ENCODE measurements at regions of chr10 and their contacts with region 1.

Region 1: DNA sequence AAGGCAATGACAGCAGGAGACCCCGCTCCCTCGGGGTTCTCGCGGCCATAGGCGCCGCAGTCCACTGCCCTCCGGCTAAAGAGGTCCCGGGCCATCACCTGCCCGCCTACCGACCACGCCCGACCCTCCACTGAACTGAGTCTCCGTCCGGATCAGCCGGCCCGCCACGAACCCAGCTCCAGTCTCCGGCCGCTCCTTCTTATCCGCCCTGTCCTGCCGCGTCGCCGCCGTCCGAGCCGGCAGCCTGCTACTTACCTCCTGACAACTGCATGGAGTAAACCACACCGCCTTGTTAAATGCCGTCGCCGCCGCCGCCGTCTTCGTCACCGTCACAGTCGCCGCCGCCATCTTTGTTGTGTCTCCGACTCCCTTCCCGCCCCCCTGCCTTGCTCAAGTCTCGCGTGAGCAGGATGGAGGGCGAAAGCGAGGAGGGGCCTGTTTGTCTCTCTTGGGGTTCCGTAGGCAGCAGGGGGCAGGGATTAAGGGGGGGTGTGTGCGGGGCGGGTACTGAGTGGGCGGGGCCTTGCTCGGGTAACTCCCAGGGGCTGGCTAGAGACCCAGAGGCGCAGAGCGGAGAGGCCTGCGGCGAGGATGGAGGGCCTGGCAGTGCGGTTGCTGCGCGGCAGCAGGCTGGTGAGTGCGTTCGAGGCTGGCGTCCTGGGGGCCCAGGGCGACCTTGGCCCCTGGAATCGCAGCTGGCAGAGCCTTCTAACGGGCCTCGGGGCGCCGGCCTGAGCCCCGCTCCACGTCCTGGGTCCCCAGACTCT is at the starts of genes ACADSB and IKZF5:
- DNase-seq: peak; percentile 97
- ATAC-seq: peak; percentile 93
- H3K4me3 ChIP-seq: peak within 1 kb of the TSS; percentile 63 to 100 (median 95)
- H3K4me3 Mint-ChIP-seq: peak within 1 kb of the TSS; percentile 98
- H3K27ac ChIP-seq: peak within 1 kb of the TSS; percentile 92 to 98
- H3K27ac Mint-ChIP-seq: peak within 1 kb of the TSS; percentile 98
- H3K4me1 ChIP-seq: peaks cover 22 to 25% of the 10 kb centered on the region in 2 donors
- H3K4me1 Mint-ChIP-seq: peaks cover 48% of the 10 kb centered on the region
- H3K27me3 ChIP-seq: no peaks in the 10 kb centered on the region
- H3K27me3 Mint-ChIP-seq: no peaks in the 10 kb centered on the region
- CTCF ChIP-seq: no peak
- total RNA-seq, gene ACADSB: 27.8 and 27.9 TPM in 2 replicates
- total RNA-seq, gene IKZF5: 24.0 and 24.6 TPM in 2 replicates

Region 2: DNA sequence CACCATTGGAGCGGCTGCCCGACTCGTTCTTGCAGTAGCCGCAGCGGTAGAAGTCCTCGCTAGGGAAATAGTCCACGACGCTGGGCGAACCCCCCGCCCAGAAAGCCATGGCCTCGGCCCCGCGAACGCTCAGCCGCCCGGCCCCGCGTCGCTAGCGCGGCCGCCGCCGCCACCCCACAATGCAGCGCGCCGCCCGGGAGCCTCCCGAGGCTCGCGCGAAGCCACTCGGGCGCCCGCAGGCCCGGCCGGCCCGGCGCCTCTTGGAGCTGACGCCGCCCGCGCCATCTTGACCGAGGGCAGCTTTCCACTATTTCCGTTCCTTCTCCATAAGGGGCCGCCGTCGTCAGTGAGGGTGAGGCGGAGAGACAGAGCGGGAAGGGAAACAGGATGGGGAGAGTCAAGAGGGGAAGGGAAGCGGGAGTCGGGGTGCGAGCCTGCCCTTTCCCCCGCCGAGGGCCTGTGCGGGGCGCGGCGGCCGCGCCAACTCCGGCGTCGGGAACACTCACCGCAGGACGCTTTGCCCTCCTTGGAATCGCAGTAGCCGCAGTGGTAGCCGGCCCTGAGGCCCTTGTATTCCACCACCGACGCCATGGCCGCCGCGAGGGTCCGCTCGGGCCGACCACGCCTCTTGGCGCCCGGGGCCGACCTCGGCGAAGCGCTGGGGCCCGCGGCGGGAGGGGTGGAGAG is 1080.6 kb before region 1 on chr10 and contains the start of gene ATE1:
- CTCF ChIA-PET with region 1: no interaction called
- POLR2A ChIA-PET with region 1: interaction called, 3 read pairs
- intact Hi-C with region 1: loop called (anchors 2 kb)
- DNase-seq: peak; percentile 89
- ATAC-seq: peak; percentile 93
- H3K4me3 ChIP-seq: peak within 1 kb of the TSS; percentile 71 to 99 (median 82)
- H3K4me3 Mint-ChIP-seq: peak within 1 kb of the TSS; percentile 96
- H3K27ac ChIP-seq: peak within 1 kb of the TSS; percentile 96 to 97
- H3K27ac Mint-ChIP-seq: peak within 1 kb of the TSS; percentile 94
- H3K4me1 ChIP-seq: peaks cover 10 to 16% of the 10 kb centered on the region in 2 donors
- H3K4me1 Mint-ChIP-seq: peaks cover 19% of the 10 kb centered on the region
- H3K27me3 ChIP-seq: no peaks in the 10 kb centered on the region
- H3K27me3 Mint-ChIP-seq: no peaks in the 10 kb centered on the region
- CTCF ChIP-seq: no peak
- total RNA-seq, gene ATE1: 32.0 and 40.3 TPM in 2 replicates

Region 3: GRCh38 chr10:122879339-122880273 is 129.0 kb before region 1 on chr10 and contains the start of gene FAM24B:
- CTCF ChIA-PET with region 1: no interaction called
- POLR2A ChIA-PET with region 1: no interaction called
- intact Hi-C with region 1: loop called (anchors 1 kb)
- DNase-seq: peak; percentile 96
- ATAC-seq: peak; percentile 84
- H3K4me3 ChIP-seq: peak within 1 kb of the TSS; percentile 49 to 83 (median 64)
- H3K4me3 Mint-ChIP-seq: peak within 1 kb of the TSS; percentile 86
- H3K27ac ChIP-seq: peak within 1 kb of the TSS; percentile 62 to 86
- H3K27ac Mint-ChIP-seq: peak within 1 kb of the TSS; percentile 92
- H3K4me1 ChIP-seq: peaks cover 12 to 17% of the 10 kb centered on the region in 2 donors
- H3K4me1 Mint-ChIP-seq: peaks cover 39% of the 10 kb centered on the region
- H3K27me3 ChIP-seq: no peaks in the 10 kb centered on the region
- H3K27me3 Mint-ChIP-seq: no peaks in the 10 kb centered on the region
- CTCF ChIP-seq: no peak
- total RNA-seq, gene FAM24B: 11.7 and 12.5 TPM in 2 replicates

Region 4: GRCh38 chr10:122953827-122954730 is 54.5 kb before region 1 on chr10 and contains the start of gene C10orf88:
- CTCF ChIA-PET with region 1: interaction called, 3 read pairs
- POLR2A ChIA-PET with region 1: interaction called, 12 read pairs
- intact Hi-C with region 1: loop called (anchors 1 kb)
- DNase-seq: peak; percentile 99
- ATAC-seq: peak; percentile 93
- H3K4me3 ChIP-seq: peak within 1 kb of the TSS; percentile 17 to 92 (median 87)
- H3K4me3 Mint-ChIP-seq: peak within 1 kb of the TSS; percentile 87
- H3K27ac ChIP-seq: peak within 1 kb of the TSS; percentile 58 to 82
- H3K27ac Mint-ChIP-seq: peak within 1 kb of the TSS; percentile 91
- H3K4me1 ChIP-seq: peaks cover 16 to 19% of the 10 kb centered on the region in 2 donors
- H3K4me1 Mint-ChIP-seq: peaks cover 26% of the 10 kb centered on the region
- H3K27me3 ChIP-seq: no peaks in the 10 kb centered on the region
- H3K27me3 Mint-ChIP-seq: no peaks in the 10 kb centered on the region
- CTCF ChIP-seq: no peak
- total RNA-seq, gene C10orf88: 11.1 and 11.9 TPM in 2 replicates

Region 5: DNA sequence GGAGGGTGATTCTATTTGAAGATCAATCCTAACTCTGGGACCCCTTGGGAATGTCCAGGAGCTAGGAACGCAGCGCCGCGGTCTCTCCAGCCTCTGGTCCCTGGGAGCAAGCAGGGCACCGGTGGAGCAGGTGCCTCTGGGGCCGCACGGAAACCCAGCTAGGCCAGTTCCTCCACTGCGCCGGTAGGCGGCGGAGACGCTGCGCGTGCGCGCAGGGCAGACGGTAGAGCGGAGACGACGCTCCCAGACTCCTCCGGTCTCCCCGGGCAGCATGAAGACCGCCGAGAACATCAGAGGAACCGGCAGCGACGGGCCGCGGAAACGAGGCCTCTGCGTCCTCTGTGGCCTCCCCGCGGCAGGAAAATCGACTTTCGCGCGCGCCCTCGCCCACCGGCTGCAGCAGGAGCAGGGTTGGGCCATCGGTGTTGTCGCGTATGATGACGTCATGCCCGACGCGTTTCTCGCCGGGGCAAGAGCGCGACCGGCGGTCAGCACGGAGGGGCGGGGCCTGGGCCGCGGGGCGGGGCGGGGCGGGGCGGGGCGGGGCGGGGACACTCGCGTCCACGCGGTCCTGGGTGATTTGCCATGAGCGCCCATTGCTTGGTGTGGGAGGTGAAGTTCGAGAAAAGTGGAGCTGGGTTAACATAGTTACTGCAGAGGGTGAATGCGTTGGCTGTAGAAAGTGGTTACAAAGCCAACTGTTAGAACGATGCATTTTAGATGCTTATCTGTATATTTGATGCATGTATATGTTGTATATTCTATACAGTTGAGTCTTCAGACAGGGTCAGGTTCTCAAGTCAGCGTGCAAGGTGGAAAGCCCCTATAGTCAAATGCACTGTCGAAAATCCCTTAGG is 28.2 kb before region 1 on chr10 and contains the start of gene PSTK:
- CTCF ChIA-PET with region 1: interaction called, 26 read pairs
- POLR2A ChIA-PET with region 1: interaction called, 7 read pairs
- intact Hi-C with region 1: loop called (anchors 1 kb)
- DNase-seq: peak; percentile 98
- ATAC-seq: peak; percentile 95
- H3K4me3 ChIP-seq: peak within 1 kb of the TSS; percentile 55 to 86 (median 64)
- H3K4me3 Mint-ChIP-seq: peak within 1 kb of the TSS; percentile 97
- H3K27ac ChIP-seq: peak within 1 kb of the TSS; percentile 81 to 89
- H3K27ac Mint-ChIP-seq: peak within 1 kb of the TSS; percentile 99
- H3K4me1 ChIP-seq: peaks cover 10 to 15% of the 10 kb centered on the region in 2 donors
- H3K4me1 Mint-ChIP-seq: peaks cover 14% of the 10 kb centered on the region
- H3K27me3 ChIP-seq: no peaks in the 10 kb centered on the region
- H3K27me3 Mint-ChIP-seq: peaks cover 5% of the 10 kb centered on the region
- CTCF ChIP-seq: peak; percentile 97
- total RNA-seq, gene PSTK: 8.2 and 8.5 TPM in 2 replicates

Region 6: DNA sequence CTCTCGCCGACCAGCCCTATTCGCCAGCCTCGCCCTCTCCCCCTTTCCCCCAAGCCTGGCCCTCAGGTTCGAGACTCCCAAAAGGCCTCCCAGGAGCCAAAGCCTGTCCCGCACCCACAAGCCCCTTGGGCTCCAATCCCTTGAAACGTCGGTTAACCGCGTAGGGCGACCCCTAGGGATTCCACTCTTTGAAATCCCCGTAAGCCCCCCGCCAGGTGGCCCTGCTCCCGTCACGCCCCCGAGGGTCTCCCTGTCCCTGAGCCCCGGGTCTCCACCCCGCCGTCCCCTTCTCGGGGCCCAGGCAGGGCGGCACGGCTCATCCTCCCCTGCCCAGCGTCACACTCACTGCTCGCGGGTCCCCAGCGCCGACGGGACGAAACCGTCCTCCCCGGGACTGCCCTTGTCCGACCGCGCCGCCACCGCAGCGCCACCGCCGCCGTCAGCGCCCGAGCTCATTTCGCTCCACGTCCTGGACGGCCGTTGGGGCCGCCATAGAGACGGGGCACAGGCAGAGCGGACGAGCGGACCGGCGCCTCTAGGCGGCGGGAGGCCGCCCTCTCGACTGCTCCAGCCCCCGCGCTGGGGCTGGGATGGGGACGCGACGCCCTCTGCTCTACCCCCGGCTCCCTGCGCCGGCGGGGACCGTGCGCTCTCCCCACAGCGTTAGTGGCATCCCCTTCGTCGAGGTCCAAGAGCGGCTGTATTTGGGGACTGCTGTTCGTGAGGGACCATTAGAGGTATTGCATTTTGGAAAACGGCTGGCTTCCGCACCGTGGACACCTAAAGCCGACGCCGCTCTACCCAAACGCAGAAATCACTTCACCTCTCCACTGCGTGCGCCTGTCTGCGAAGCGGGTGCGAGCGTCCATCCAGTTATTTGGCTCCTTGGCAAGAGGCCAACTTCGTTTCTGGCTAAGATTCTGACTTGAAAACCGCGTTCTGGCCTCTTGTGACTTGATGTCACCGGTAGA is 1783.0 kb after region 1 on chr10 and contains the start of gene EEF1AKMT2:
- CTCF ChIA-PET with region 1: no interaction called
- POLR2A ChIA-PET with region 1: no interaction called
- intact Hi-C with region 1: loop called (anchors 2 kb)
- DNase-seq: peak; percentile 91
- ATAC-seq: peak; percentile 97
- H3K4me3 ChIP-seq: peak within 1 kb of the TSS; percentile 75 to 98 (median 95)
- H3K4me3 Mint-ChIP-seq: peak within 1 kb of the TSS; percentile 100
- H3K27ac ChIP-seq: peak within 1 kb of the TSS; percentile 68 to 79
- H3K27ac Mint-ChIP-seq: peak within 1 kb of the TSS; percentile 99
- H3K4me1 ChIP-seq: peaks cover 4 to 10% of the 10 kb centered on the region in 2 donors
- H3K4me1 Mint-ChIP-seq: peaks cover 17% of the 10 kb centered on the region
- H3K27me3 ChIP-seq: no peaks in the 10 kb centered on the region
- H3K27me3 Mint-ChIP-seq: no peaks in the 10 kb centered on the region
- CTCF ChIP-seq: peak; percentile 18
- total RNA-seq, gene EEF1AKMT2: 15.0 and 15.4 TPM in 2 replicates

Region 7: GRCh38 chr10:124916585-124917427 is 1908.2 kb after region 1 on chr10:
- CTCF ChIA-PET with region 1: no interaction called
- POLR2A ChIA-PET with region 1: no interaction called
- intact Hi-C with region 1: loop called (anchors 5 kb)
- DNase-seq: peak; percentile 98
- ATAC-seq: peak; percentile 89
- H3K4me3 ChIP-seq: peak overlapping the region; percentile 63 to 87 (median 79)
- H3K4me3 Mint-ChIP-seq: peak overlapping the region; percentile 90
- H3K27ac ChIP-seq: peak overlapping the region; percentile 81 to 87
- H3K27ac Mint-ChIP-seq: peak overlapping the region; percentile 90
- H3K4me1 ChIP-seq: peaks cover 18 to 20% of the 10 kb centered on the region in 2 donors
- H3K4me1 Mint-ChIP-seq: peaks cover 37% of the 10 kb centered on the region
- H3K27me3 ChIP-seq: peaks cover 0 to 5% (median 3%) of the 10 kb centered on the region in 4 experiments
- H3K27me3 Mint-ChIP-seq: peaks cover 9% of the 10 kb centered on the region
- CTCF ChIP-seq: no peak

Measured in B cell (primary cell).